ENCODE measurements at regions of chr16 and their contacts with region 1.

Region 1: GRCh38 chr16:1763521-1764511 is 7.5 kb downstream of the NME3 start:
- DNase-seq: peak; percentile 59 to 92
- H3K4me3 ChIP-seq: peak overlapping the region; percentile 8 to 57 (median 36); a peak in 7 of 8 replicates
- H3K27ac ChIP-seq: no peak overlapping the region
- H3K4me1 ChIP-seq: peaks cover 0 to 13% (median 7%) of the 10 kb centered on the region in 4 experiments; a peak in 5 of 7 replicates
- H3K27me3 ChIP-seq: no peaks in the 10 kb centered on the region; a peak in 1 of 7 replicates
- CTCF ChIP-seq: peak in 2 of 3 experiments; percentile 66 to 82; a peak in 3 of 4 replicates
- EP300 ChIP-seq: no peak
- POLR2A ChIP-seq: no peak
- RAD21 ChIP-seq: peak; percentile 71 to 75

Region 2: DNA sequence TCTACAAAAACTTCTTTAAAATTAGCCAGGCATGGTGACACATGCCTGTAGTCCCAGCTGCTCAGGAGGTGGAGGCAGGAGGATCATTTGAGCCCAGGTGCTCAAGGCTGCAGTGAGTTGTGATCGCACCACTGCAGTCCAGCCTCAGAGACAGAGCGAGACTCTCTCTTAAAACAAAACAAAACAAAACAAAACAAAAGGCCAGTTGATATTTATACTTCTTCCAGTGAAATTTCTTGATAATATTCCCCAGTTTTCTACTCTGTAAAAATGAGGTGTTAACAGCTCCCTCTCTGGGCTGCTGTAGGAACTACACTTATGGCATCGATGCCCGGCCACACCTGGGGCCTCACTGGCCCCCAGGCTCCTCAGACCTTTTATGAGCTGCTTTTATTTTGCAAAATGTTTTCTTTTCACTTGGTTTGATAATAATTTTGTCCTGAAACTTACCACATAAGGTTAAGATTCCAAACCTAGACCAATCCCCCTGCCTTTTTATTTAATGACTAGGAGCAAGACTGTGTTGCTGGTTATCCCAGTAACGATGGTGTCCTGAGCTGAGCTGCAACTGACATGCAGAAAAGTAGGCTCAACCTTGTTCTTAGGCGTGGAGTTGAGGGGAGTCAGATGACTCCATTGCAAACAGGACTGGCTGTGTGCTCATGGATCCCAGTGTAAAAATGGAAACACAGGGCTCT is 40.2 kb before region 1 on chr16:
- CTCF ChIA-PET with region 1: interaction called, 21 read pairs
- POLR2A ChIA-PET with region 1: no interaction called
- DNase-seq: peak in 1 of 2 experiments; percentile 74
- H3K4me3 ChIP-seq: no peak overlapping the region
- H3K27ac ChIP-seq: no peak overlapping the region
- H3K4me1 ChIP-seq: 0 out of 7 replicates have a peak, but pooled peaks cover 0 to 2% (median 0%) of the 10 kb centered on the region in 4 experiments
- H3K27me3 ChIP-seq: no peaks in the 10 kb centered on the region
- CTCF ChIP-seq: peak; percentile 46 to 60 (median 59)
- EP300 ChIP-seq: no peak
- POLR2A ChIP-seq: no peak
- RAD21 ChIP-seq: peak; percentile 26 to 46; a peak in 3 of 4 replicates

Region 3: DNA sequence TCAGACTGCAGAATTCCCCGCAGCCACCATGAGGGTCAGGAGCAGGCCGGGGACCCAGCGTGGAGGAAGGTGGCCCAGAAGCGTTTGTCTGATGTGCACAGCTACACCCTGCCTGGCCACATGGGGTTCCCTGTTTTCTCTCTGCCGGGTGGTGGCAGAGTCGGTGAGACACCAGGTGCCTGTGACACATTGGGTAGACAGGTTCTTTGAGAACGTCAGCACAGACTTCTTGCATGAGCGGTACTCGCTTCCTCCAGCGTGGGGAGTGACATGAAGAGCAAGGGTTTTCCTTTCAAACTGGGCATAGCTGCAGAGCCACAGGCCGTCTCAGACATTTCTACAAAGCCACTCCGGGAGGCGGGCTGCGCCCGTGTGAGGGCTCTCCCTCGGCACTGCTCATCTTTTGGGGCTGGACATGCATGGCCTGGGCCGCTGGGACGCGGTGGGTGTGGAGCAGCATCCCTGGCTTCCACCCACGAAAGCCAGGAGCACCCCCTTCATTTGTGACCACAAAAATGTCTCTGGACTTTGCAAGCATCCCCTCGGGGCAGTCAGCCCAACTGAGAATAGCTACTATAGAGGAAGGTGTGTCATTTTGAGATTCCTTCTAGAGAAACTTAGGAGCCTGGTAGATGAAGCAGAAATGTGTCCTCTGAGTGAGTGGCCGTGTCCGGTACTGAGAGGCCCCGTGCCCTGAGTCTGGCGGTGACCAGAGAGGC is 18.5 kb before region 1 on chr16:
- CTCF ChIA-PET with region 1: interaction called, 13 read pairs
- POLR2A ChIA-PET with region 1: interaction called, 18 read pairs
- DNase-seq: no peak
- H3K4me3 ChIP-seq: no peak overlapping the region
- H3K27ac ChIP-seq: no peak overlapping the region
- H3K4me1 ChIP-seq: no peaks in the 10 kb centered on the region
- H3K27me3 ChIP-seq: no peaks in the 10 kb centered on the region
- CTCF ChIP-seq: no peak
- EP300 ChIP-seq: no peak
- POLR2A ChIP-seq: no peak
- RAD21 ChIP-seq: no peak

Region 4: DNA sequence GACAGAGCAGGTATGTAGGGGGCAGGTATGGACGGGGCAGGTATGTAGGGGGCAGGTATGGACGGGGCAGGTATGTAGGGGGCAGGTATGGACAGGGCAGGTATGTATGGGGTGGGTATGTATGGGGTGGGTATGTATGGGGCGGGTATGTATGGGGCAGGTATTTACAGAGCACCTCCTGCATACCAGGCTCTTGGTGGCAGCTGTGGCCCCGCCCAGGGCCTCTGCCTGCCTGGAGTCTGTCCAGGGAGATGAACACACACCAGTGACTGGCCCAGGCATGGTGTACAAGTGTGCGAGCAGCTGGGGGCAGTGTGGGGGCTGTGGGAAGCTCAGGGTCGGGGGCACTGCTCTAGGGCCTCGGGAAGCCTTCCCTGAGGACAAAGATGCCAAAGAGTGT is 186.2 kb after region 1 on chr16:
- CTCF ChIA-PET with region 1: no interaction called
- POLR2A ChIA-PET with region 1: no interaction called
- DNase-seq: no peak
- H3K4me3 ChIP-seq: no peak overlapping the region
- H3K27ac ChIP-seq: no peak overlapping the region
- H3K4me1 ChIP-seq: peaks cover 0 to 3% (median 0%) of the 10 kb centered on the region in 4 experiments; a peak in 3 of 7 replicates
- H3K27me3 ChIP-seq: no peaks in the 10 kb centered on the region
- CTCF ChIP-seq: no peak
- EP300 ChIP-seq: no peak
- POLR2A ChIP-seq: no peak
- RAD21 ChIP-seq: no peak